K562 (cell line): ENCODE measurements at regions of chr6 and their contacts with region 1.

Region 1: DNA sequence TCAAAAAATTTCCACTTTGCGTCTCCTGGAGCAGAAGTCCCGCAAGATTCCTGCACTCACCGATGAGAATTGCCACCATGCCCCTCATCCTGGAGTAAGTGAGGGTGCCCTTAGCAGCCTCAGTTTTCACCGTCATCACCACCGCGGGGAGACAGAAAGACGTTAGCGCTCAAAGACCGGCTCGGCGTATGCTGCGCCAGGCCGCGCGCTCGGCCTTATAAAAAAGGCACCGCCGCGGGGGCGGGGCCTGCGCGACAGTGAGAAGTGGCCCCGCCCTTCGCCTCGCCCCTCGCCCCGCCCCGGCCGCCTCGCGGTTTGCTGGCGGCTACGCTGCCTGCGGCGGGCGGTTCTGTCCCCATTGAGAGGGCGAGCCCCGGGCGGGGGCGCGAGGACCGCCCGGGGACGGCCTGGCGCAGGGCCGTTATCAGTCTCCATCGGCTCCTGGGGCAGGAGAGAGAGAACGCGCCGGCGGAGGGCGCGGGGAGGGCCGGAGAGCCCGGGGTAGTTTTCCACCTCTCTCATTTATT is 122.3 kb upstream of the SLC2A12 start:
- DNase-seq: peak; percentile 93 to 96 (median 95)
- ATAC-seq: peak; percentile 96
- H3K4me3 ChIP-seq: peak overlapping the region; percentile 80
- H3K27ac ChIP-seq: peak overlapping the region; percentile 87
- H3K4me1 ChIP-seq: peaks cover 9 to 16% of the 10 kb centered on the region in 2 experiments; a peak in 4 of 5 replicates
- H3K27me3 ChIP-seq: no peaks in the 10 kb centered on the region
- CTCF ChIP-seq: peak in 2 of 3 experiments; percentile 24 to 33; a peak in 4 of 6 replicates
- EP300 ChIP-seq: peak; percentile 54
- POLR2A ChIP-seq: peak; percentile 97
- RAD21 ChIP-seq: peak; percentile 35 to 59

Region 2: DNA sequence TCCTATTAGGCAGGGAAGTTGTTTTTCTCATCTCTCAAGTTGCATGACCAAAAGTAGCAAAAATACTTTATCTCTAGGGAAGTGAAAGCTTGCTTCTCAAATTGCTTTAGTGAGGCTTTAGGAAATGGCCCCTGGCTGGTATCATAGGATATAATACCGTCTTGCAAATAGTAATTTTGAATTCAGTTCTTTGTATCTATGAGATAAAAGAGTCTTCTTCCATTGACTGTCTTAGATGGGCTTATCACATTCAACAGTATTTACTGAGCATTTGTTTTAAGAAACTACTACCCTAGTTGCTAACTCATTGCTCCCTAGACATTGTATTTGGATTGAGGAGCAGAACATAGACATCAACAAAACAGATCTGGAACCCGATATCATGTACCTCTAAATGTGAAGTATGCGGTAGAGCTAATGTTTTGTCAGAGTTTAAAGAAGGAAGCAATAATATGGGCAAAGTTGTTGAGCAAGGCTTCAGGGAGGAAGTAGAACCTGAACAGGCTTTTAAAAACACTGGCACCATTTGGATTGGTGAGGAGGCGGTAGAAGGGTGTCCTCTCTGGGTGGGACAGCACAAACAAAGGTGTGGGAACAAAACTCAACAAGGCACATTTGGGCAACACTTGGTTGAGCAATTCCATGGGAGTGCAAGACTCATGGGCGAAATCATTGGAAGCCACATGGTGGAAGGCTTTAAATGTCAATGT is 41.7 kb after region 1 on chr6:
- CTCF ChIA-PET with region 1: no interaction called
- POLR2A ChIA-PET with region 1: no interaction called
- in situ Hi-C with region 1: no loop called
- intact Hi-C with region 1: no loop called
- DNase-seq: peak in 2 of 4 experiments; percentile 32 to 48
- ATAC-seq: peak; percentile 65
- H3K4me3 ChIP-seq: no peak overlapping the region
- H3K27ac ChIP-seq: peak overlapping the region; percentile 27
- H3K4me1 ChIP-seq: peaks cover 7 to 16% of the 10 kb centered on the region in 2 experiments; a peak in 4 of 5 replicates
- H3K27me3 ChIP-seq: no peaks in the 10 kb centered on the region
- CTCF ChIP-seq: no peak
- EP300 ChIP-seq: peak; percentile 33; the same call in 1 of the 2 replicates
- POLR2A ChIP-seq: no peak
- RAD21 ChIP-seq: no peak

Region 3: GRCh38 chr6:134261766-134262165 is 87.0 kb after region 1 on chr6:
- CTCF ChIA-PET with region 1: no interaction called
- POLR2A ChIA-PET with region 1: no interaction called
- in situ Hi-C with region 1: no loop called
- intact Hi-C with region 1: loop called (anchors 5 kb)
- DNase-seq: no peak
- ATAC-seq: peak; percentile 29; the same call in 1 of the 3 replicates
- H3K4me3 ChIP-seq: no peak overlapping the region
- H3K27ac ChIP-seq: no peak overlapping the region
- H3K4me1 ChIP-seq: no peaks in the 10 kb centered on the region
- H3K27me3 ChIP-seq: no peaks in the 10 kb centered on the region
- CTCF ChIP-seq: no peak
- EP300 ChIP-seq: no peak
- POLR2A ChIP-seq: no peak
- RAD21 ChIP-seq: no peak

Region 4: DNA sequence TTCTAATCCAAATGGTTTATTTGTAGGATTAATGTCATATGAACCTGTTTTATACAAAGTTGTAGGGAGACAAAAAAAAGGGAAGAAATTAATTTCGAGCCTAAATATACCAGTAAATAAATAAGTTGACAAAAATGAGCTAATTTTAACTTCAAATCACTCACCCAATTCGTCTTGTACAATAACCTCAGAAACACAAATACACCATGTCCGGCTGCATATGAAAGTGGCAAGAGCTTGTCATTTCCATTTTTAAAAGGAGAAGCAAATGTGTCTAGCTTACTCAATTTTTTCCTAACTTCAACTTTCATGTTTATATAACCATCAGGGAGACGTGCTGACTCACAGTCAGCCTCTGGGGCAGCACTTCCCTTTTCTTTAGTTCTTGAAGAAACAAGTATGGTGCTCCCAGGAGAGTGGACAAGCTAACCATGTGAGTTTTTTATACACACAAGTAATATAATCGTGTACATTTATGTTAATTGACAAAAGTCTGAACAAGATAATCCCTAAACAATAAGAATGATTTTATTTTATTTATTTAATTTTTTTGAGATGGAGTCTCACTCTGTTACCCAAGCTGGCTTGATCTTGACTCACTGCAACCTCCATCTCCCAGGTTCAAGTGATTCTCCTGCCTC is 198.7 kb after region 1 on chr6:
- CTCF ChIA-PET with region 1: no interaction called
- POLR2A ChIA-PET with region 1: interaction called, 3 read pairs
- in situ Hi-C with region 1: no loop called
- intact Hi-C with region 1: loop called (anchors 10 kb)
- DNase-seq: peak in 2 of 4 experiments; percentile 59 to 78
- ATAC-seq: peak; percentile 94
- H3K4me3 ChIP-seq: no peak overlapping the region
- H3K27ac ChIP-seq: peak overlapping the region; percentile 79
- H3K4me1 ChIP-seq: peaks cover 0 to 19% of the 10 kb centered on the region in 2 experiments; a peak in 4 of 5 replicates
- H3K27me3 ChIP-seq: no peaks in the 10 kb centered on the region
- CTCF ChIP-seq: no peak
- EP300 ChIP-seq: peak; percentile 42; the same call in 1 of the 2 replicates
- POLR2A ChIP-seq: no peak
- RAD21 ChIP-seq: peak; percentile 16 to 21; a peak in 1 of 4 replicates

Region 5: DNA sequence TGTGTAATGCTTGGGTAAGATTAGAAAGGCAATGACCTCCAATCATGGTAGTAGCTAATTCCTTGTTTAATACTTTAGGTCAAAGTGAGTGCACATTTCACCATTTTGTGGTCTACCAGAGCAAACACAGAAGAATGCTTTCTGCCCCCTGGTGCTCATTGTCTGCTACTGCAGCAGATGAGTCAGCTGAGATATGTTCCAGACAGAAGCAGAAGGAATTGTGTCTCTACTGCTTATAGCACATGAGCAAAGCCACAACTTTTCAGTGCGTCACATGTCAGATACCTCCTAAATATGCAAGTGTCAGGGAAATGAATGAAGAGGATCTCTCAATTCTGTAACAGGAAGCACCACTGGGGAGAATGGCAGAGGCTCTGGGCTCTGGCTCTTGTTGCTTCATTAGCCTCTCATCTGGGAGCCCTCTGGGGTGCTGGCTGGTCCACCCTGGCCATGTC is 466.3 kb after region 1 on chr6:
- CTCF ChIA-PET with region 1: interaction called, 29 read pairs
- POLR2A ChIA-PET with region 1: interaction called, 9 read pairs
- in situ Hi-C with region 1: loop called (anchors 5 kb)
- intact Hi-C with region 1: loop called (anchors 1 kb)
- DNase-seq: peak; percentile 59 to 84 (median 64)
- ATAC-seq: peak; percentile 95
- H3K4me3 ChIP-seq: no peak overlapping the region
- H3K27ac ChIP-seq: no peak overlapping the region
- H3K4me1 ChIP-seq: 0 out of 5 replicates have a peak, but pooled peaks cover 0 to 2% of the 10 kb centered on the region in 2 experiments
- H3K27me3 ChIP-seq: no peaks in the 10 kb centered on the region
- CTCF ChIP-seq: peak; percentile 76 to 89 (median 88)
- EP300 ChIP-seq: no peak
- POLR2A ChIP-seq: no peak
- RAD21 ChIP-seq: peak; percentile 97 to 98

Region 6: DNA sequence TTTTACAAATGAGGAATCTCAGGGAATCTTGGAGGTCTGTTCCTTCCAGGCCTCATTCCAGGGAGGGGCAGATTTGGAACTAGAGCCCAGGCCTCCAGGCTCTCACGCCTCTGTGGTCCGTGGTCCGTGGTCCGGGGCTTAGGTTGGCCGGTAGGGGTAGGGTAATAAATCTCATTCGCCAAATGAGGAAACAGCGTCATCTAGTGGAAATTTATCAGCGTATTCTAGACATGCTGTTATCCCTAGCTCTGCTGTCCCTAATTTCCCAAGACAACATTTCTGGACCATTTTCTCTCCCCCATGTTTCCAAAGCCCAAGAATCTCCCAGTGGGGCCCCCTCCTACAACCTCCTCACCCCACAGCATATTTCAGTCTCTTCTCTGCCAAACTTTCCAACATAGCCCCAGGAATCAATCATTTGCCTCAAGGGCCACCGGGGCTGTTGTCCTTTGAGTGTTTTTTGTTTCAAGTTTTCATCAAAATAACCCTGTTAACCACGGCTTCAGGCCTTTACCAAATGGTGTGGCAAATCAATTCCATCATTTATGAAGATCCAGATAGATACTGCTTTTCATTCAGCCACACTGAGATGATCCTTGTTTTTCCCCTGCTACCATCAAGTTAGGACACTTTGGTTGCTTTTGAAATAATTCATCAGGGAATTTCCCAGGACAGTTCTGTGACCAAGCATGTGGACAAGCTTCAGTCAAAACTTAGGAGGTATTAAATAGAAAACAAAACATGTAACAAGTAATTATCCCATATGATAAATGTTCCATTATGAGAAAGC is 648.4 kb after region 1 on chr6:
- CTCF ChIA-PET with region 1: interaction called, 53 read pairs
- POLR2A ChIA-PET with region 1: interaction called, 8 read pairs
- in situ Hi-C with region 1: loop called (anchors 5 kb)
- intact Hi-C with region 1: loop called (anchors 1 kb)
- DNase-seq: peak; percentile 73 to 86 (median 78)
- ATAC-seq: peak; percentile 100
- H3K4me3 ChIP-seq: no peak overlapping the region
- H3K27ac ChIP-seq: no peak overlapping the region
- H3K4me1 ChIP-seq: no peaks in the 10 kb centered on the region
- H3K27me3 ChIP-seq: peaks cover 11% of the 10 kb centered on the region in 2 experiments
- CTCF ChIP-seq: peak; percentile 92 to 99 (median 98)
- EP300 ChIP-seq: no peak
- POLR2A ChIP-seq: no peak
- RAD21 ChIP-seq: peak; percentile 98

Region 7: GRCh38 chr6:134938896-134939295 is 764.2 kb after region 1 on chr6:
- CTCF ChIA-PET with region 1: interaction called, 21 read pairs
- POLR2A ChIA-PET with region 1: interaction called, 3 read pairs
- in situ Hi-C with region 1: no loop called
- intact Hi-C with region 1: loop called (anchors 2 kb)
- DNase-seq: no peak
- ATAC-seq: no peak
- H3K4me3 ChIP-seq: no peak overlapping the region
- H3K27ac ChIP-seq: no peak overlapping the region
- H3K4me1 ChIP-seq: no peaks in the 10 kb centered on the region; a peak in 1 of 5 replicates
- H3K27me3 ChIP-seq: peaks cover 0 to 2% of the 10 kb centered on the region in 2 experiments; a peak in 1 of 5 replicates
- CTCF ChIP-seq: no peak
- EP300 ChIP-seq: no peak
- POLR2A ChIP-seq: no peak
- RAD21 ChIP-seq: no peak